ENCODE measurements at regions of chr14 and their contacts with region 1.

Region 1: DNA sequence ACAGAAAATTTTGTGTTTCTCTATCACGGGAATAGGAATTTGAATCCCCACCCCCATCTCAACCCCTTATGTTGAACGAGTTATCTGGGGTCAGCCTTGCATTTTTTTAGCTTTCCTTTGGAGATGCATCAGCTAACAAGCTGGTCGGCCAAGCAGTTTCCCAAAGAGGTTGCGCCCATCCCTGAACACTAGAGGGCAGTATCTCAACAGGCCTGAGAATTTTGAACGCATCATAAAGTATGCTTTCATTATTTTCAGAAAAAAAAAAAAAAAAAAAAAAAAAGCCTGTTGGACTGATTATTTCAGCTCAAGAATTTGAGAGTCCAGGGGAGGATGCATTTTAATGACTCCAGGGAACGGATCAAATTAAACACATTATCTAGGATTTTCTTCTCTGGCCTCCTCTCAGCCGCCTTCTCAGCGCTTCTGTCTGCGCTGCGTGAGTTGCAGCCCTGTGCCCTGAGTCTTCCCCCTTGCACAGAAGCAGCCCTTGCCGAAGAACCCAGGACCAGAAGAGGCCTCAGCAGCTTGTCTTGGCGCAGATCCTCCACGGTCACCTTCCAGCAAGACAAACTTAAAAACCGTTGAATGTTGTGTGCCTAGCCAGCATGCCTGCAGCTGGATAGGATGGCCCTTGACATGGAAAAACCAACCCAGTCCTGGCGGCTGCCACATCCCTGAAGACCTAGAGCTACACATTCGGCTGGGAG is 76.6 kb upstream of the GZMB start:
- DNase-seq: peak; percentile 44
- H3K4me3 Mint-ChIP-seq: no peak overlapping the region
- H3K27ac Mint-ChIP-seq: no peak overlapping the region
- H3K4me1 Mint-ChIP-seq: no peaks in the 10 kb centered on the region
- H3K27me3 Mint-ChIP-seq: no peaks in the 10 kb centered on the region
- CTCF ChIP-seq: peak; percentile 76

Region 2: GRCh38 chr14:24721775-24722174 is 11.2 kb after region 1 on chr14:
- CTCF ChIA-PET with region 1: interaction called, 12 read pairs
- POLR2A ChIA-PET with region 1: no interaction called
- intact Hi-C with region 1: no loop called
- DNase-seq: no peak
- H3K4me3 Mint-ChIP-seq: no peak overlapping the region
- H3K27ac Mint-ChIP-seq: no peak overlapping the region
- H3K4me1 Mint-ChIP-seq: no peaks in the 10 kb centered on the region
- H3K27me3 Mint-ChIP-seq: peaks cover 7% of the 10 kb centered on the region
- CTCF ChIP-seq: no peak

Region 3: GRCh38 chr14:25132732-25133422 is 422.3 kb after region 1 on chr14:
- CTCF ChIA-PET with region 1: interaction called, 32 read pairs
- POLR2A ChIA-PET with region 1: no interaction called
- intact Hi-C with region 1: no loop called
- DNase-seq: peak; percentile 1
- H3K4me3 Mint-ChIP-seq: peak overlapping the region; percentile 42
- H3K27ac Mint-ChIP-seq: no peak overlapping the region
- H3K4me1 Mint-ChIP-seq: no peaks in the 10 kb centered on the region
- H3K27me3 Mint-ChIP-seq: peaks cover 33% of the 10 kb centered on the region
- CTCF ChIP-seq: peak; percentile 60

Region 4: DNA sequence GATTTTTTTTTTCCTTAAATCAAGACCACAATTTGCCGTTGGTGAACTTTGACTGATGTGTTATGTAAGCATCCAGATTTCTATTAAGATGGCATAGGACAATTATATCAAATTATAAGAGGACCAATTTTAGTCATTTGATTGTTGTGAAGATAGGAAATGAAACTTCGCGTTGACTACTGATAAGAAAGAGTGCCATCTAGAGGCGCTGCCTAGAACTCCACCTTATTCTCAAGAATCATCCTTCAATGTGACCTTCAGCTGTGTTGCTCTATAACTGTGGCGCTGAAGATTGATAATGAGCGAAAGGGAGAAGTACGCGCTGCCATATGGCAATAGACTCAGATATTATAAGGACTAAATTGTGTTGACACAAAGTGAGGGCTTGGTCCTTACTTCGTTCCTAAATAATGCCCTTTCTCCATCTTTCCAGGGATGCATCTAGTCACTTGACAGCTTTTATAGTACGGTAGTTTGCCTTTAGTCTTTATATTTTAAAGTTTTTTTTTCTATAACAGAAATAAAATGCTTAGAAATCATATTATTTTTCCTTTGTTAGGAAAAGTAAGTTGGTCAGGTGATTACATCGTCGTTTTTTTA is 690.1 kb after region 1 on chr14:
- CTCF ChIA-PET with region 1: interaction called, 21 read pairs
- POLR2A ChIA-PET with region 1: no interaction called
- intact Hi-C with region 1: no loop called
- DNase-seq: peak; percentile 1
- H3K4me3 Mint-ChIP-seq: no peak overlapping the region
- H3K27ac Mint-ChIP-seq: no peak overlapping the region
- H3K4me1 Mint-ChIP-seq: no peaks in the 10 kb centered on the region
- H3K27me3 Mint-ChIP-seq: peaks cover 19% of the 10 kb centered on the region
- CTCF ChIP-seq: peak; percentile 72